ENCODE measurements at regions of chr20 and their contacts with region 1.

Region 1: GRCh38 chr20:54980103-54980960 is 504.9 kb downstream of the DOK5 start:
- DNase-seq: peak; percentile 14
- H3K27ac ChIP-seq: no peak overlapping the region
- CTCF ChIP-seq: peak; percentile 46; the same call in 1 of the 2 replicates

Region 2: GRCh38 chr20:54726768-54727422 is 253.4 kb before region 1 on chr20:
- CTCF ChIA-PET with region 1: no interaction called
- POLR2A ChIA-PET with region 1: interaction called, 16 read pairs
- DNase-seq: no peak
- H3K27ac ChIP-seq: no peak overlapping the region
- CTCF ChIP-seq: no peak; the same call in 1 of the 2 replicates

Region 3: GRCh38 chr20:55704458-55704857 is 724.1 kb after region 1 on chr20:
- CTCF ChIA-PET with region 1: interaction called, 11 read pairs
- POLR2A ChIA-PET with region 1: no interaction called
- DNase-seq: no peak
- H3K27ac ChIP-seq: no peak overlapping the region
- CTCF ChIP-seq: no peak